ENCODE measurements at regions of chr19 and their contacts with region 1.

Region 1: GRCh38 chr19:40285353-40286234 is 449 bp upstream of the AKT2 start:
- DNase-seq: peak; percentile 95 to 100 (median 99)

Region 2: GRCh38 chr19:39916851-39917396 is 368.7 kb before region 1 on chr19:
- intact Hi-C with region 1: no loop called
- DNase-seq: peak in 11 of 42 donors; percentile 6 to 40 (median 28)

Region 3: DNA sequence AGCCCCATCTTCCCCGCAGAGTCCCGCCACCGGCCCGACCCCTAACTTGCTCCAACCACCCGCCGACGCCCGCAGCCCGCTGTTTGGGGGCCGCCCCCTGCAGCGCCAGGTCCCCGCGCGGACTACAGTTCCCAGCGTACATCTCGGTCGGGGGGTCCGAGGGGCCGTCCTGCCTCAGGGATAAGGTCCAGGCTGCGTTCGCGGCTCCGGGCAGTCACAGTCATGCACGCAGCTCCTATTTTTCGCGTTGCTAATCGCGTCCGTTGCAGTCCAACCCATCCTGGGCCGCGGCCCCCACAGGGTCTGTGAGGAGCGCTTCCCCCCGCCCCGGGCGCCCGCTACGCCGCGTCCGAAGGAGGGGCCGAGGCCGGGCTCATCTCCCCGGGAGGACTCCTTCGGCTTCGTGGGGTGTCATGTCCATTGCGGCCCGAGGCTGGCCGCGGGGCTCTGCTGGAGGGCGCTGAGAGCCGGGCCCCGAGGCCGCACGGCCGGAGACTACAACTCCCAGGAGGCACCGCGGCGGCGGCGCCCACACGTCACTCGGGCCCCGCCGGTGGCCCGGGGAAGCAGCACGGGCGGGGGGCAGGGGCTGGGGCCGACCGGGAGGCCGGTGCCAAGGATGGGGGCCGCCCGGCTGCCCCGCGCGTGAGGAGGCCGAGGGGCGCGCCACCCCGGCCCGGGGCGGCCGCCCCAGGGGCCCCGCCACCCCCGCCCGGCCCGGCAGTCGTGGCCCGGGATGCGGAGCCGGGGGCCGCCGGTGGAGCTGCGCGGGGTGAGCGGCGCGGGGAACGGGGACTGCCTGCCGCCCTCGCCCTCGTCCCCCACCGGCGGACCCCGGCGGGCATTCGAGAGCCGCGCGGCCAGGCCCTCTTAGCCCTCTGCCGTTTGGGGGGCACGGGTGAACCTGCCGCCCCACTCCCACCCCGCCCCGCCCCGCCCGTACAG is 94.4 kb before region 1 on chr19 and contains the start of gene MAP3K10:
- intact Hi-C with region 1: loop called (anchors 2 kb)
- DNase-seq: peak; percentile 64 to 93 (median 86)

Region 4: GRCh38 chr19:40231544-40232424 is 53.8 kb before region 1 on chr19:
- intact Hi-C with region 1: loop called (anchors 5 kb)
- DNase-seq: no peak

Region 5: DNA sequence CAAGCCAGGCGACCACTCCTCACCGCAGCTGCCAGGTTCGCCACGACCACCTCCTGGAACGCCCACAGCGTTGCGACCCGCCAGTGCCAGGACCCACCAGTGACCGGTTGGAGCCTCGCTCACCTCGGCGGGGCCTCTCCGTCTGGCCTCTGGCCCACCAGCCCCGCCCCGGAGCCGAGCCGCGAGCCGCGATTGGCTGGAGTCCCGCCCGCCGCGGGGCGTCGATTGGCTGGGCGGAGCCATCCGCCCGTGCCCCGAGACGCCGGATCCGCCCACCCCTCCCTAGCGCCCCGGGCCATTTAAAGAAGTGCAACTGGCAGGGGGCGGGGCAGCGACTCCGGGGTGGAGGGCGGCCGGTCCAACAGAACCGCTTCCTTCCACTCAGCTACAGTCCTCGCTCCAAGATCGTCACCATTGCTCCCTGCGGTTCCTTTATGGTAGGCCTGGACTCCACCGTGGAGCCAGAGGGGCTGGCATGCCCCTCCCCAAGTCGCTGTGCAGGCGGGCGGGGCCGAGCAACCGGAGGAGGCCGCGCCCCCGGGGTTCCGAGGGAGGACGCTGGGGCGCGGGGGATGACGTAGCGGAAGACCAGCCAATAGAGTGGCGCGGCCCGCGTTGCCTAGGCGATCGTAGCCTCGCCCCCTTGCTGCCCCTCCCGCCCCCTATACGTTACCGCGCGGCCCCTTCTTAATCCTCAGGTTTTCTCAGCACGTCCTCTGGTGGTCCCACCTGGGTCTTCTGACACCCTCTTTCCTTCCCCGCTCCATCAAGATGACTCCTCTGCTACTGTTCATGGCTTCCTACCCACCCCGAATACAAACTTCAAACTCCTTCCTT is 158.8 kb after region 1 on chr19 and contains the start of gene SERTAD3:
- intact Hi-C with region 1: no loop called
- DNase-seq: peak; percentile 94 to 99 (median 98)